ENCODE measurements at regions of chr11 and their contacts with region 1.

Region 1: DNA sequence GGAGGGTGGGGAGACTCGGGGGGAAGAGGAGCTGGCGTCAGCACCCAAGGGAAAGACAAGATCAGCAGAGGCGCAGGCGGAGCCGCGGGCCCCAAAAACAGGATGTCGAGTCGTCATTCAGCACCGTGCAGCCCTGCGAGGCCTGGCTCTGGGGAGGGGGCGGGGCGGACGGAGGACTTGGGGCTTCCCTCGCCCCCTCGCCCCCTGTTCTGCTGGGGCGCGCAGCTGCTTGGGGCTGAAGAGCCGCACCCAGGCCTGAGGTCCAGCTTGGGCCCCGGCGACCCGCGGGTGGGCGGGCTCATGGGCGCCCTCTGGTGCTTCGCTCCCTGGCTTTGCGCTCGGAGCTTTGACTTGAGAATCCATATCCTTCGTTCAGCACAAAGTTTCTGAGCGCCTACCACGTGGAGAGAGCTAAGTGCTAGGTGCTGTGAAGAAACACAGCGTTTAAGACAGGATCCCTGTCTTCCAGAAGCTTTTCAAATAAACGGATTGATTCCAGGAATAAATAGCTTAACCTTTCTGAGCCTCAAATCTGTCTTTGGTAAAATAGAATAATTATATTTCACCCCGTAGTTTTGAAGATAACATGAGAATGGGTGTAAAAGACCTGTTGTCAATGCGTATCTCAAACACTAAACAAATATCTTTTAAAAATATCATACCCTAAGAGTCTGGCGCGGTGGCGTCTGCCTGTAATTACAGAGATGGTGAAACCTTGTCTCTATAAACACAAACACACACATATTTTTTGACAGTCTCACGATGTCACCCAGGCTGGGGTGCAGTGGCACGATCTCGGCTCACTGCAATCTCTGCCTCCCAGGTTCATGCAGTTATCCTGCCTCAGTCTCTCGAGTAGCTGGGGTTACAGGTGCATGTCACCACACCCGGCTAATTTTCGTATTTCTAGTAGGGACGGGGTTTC is 929 bp upstream of the RHOG start:
- DNase-seq: peak; percentile 93
- H3K4me3 Mint-ChIP-seq: peak overlapping the region; percentile 90
- H3K27ac Mint-ChIP-seq: peak overlapping the region; percentile 96
- H3K4me1 Mint-ChIP-seq: peaks cover 44% of the 10 kb centered on the region
- H3K27me3 Mint-ChIP-seq: no peaks in the 10 kb centered on the region

Region 2: DNA sequence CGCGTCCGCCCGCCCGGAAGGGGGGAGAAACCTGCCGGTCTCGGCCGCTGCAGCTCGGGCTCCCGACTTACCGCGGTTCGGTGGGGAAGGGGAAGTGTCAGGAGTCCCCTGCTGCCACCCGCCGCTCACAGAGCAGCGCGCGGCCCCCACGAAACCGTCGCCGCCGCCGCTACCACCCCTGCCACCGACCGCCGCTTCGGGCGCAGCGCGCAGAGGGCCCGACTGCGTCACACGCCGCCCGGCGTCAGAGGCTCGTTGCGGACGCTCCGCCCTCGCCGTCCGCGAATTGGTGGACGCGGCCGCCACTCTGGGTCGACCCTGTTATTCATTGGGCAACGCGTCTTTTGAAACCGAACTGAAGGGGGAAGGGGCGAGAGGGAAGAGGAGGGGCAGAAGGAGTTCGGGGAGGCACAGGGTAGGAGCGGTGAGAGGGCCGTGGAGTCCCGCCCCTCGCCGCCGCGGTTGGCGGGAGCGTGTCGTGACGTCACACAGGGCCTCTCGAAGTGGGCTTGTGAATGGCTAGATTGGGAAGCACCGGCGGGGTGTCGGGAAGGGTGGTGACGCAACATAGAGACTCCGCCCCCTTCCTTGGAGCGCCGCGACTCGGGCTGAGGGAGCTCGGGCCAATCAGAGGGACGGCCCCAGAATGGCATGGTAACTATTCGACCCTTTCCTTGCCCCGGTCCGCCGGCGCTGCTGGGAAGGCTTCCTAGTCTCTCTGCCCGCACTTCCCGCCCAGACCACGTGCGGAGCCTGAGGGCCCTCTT is 44.2 kb before region 1 on chr11 and contains the start of gene NUP98:
- CTCF ChIA-PET with region 1: interaction called, 7 read pairs
- POLR2A ChIA-PET with region 1: interaction called, 34 read pairs
- DNase-seq: peak; percentile 100
- H3K4me3 Mint-ChIP-seq: peak within 1 kb of the TSS; percentile 93
- H3K27ac Mint-ChIP-seq: peak within 1 kb of the TSS; percentile 92
- H3K4me1 Mint-ChIP-seq: peaks cover 51% of the 10 kb centered on the region
- H3K27me3 Mint-ChIP-seq: no peaks in the 10 kb centered on the region
- total RNA-seq, gene NUP98: 93.9 to 95.2 TPM

Region 3: GRCh38 chr11:3824714-3825472 is 16.8 kb before region 1 on chr11:
- CTCF ChIA-PET with region 1: interaction called, 34 read pairs
- POLR2A ChIA-PET with region 1: interaction called, 45 read pairs
- DNase-seq: peak; percentile 82
- H3K4me3 Mint-ChIP-seq: no peak overlapping the region
- H3K27ac Mint-ChIP-seq: peak overlapping the region; percentile 56
- H3K4me1 Mint-ChIP-seq: peaks cover 30% of the 10 kb centered on the region
- H3K27me3 Mint-ChIP-seq: no peaks in the 10 kb centered on the region

Region 4: DNA sequence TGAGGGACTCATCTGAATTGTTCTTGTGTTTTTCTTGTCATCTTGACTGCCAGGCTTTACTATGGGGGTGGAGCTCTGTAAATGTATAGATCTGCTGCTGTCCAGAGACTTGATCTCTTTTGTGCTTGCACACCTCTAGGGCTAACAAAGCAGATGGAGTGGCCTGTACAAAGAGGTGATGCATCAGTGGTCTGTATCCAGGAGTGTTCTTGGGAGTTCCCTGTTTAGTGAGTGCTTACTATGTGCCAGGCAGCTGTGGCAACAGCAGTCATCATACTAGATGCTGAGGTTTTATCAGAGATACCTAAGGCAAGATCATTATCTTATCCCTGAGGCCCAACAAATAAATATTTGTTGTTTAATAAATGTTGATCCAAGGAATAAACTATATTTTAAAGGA is 47.2 kb after region 1 on chr11:
- CTCF ChIA-PET with region 1: no interaction called
- POLR2A ChIA-PET with region 1: no interaction called
- DNase-seq: no peak
- H3K4me3 Mint-ChIP-seq: no peak overlapping the region
- H3K27ac Mint-ChIP-seq: no peak overlapping the region
- H3K4me1 Mint-ChIP-seq: peaks cover 25% of the 10 kb centered on the region
- H3K27me3 Mint-ChIP-seq: no peaks in the 10 kb centered on the region

Region 5: DNA sequence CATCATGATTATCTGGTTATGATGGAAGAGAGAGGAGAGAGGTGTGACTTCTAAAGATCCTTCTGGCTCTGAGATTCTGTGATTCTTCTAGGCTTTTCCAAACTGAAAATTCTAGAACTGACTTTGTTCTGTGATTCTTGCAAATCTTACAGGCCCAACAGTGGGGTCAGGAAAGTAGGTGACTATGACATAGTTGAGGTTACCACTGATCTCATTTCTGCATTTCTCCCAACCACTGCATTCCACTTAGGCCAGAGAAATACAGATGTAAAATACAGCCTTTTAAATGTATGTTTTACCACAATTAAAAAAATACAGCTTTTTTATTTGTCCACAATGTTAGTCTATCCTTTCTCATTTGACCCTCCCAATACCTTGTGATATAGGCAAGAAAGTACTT is 97.5 kb after region 1 on chr11:
- CTCF ChIA-PET with region 1: interaction called, 3 read pairs
- POLR2A ChIA-PET with region 1: interaction called, 17 read pairs
- DNase-seq: no peak
- H3K4me3 Mint-ChIP-seq: no peak overlapping the region
- H3K27ac Mint-ChIP-seq: no peak overlapping the region
- H3K4me1 Mint-ChIP-seq: peaks cover 70% of the 10 kb centered on the region
- H3K27me3 Mint-ChIP-seq: no peaks in the 10 kb centered on the region

Region 6: GRCh38 chr11:3959015-3959919 is 117.6 kb after region 1 on chr11:
- CTCF ChIA-PET with region 1: interaction called, 3 read pairs
- POLR2A ChIA-PET with region 1: interaction called, 13 read pairs
- DNase-seq: no peak
- H3K4me3 Mint-ChIP-seq: no peak overlapping the region
- H3K27ac Mint-ChIP-seq: no peak overlapping the region
- H3K4me1 Mint-ChIP-seq: peaks cover 63% of the 10 kb centered on the region
- H3K27me3 Mint-ChIP-seq: no peaks in the 10 kb centered on the region

Region 7: DNA sequence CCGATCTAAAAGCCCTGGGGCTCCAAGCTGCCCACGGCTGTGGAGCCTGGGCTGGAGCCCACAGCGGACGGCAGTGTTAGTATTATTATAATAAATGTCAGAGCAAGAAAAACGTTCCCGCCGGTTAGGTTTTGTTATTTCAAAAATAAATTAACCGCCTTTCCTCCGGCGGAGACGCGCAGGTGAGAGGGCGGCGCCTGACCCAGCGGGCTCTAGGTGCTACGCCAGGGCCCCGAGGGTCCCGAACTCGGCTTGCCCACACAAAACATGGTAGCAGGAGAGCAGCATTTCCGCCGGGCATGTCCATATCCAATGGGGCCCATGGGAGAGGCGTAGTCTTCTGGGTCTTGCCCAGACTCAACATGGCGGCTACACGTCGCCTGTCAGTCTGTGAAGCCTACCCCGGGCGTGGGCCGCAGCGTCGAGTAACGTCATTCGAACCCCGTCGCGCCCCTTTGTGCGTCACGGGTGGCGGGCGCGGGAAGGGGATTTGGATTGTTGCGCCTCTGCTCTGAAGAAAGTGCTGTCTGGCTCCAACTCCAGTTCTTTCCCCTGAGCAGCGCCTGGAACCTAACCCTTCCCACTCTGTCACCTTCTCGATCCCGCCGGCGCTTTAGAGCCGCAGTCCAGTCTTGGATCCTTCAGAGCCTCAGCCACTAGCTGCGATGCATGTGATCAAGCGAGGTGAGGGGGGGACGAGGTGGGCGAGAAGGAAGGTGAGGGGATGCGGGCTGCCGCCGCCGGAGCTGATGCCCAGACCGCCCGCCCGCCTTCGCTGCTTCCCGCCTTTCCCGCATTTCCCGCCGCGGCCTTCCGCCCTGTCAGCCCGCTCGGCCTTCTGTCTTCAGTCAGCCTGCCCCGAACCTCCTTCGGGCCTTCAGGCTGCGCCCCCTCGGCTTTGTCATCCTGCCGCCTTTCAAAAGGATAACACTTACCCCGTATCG is 252.9 kb after region 1 on chr11 and contains the start of gene RRM1:
- CTCF ChIA-PET with region 1: interaction called, 6 read pairs
- POLR2A ChIA-PET with region 1: interaction called, 37 read pairs
- DNase-seq: peak; percentile 94
- H3K4me3 Mint-ChIP-seq: peak within 1 kb of the TSS; percentile 99
- H3K27ac Mint-ChIP-seq: peak within 1 kb of the TSS; percentile 97
- H3K4me1 Mint-ChIP-seq: peaks cover 79% of the 10 kb centered on the region
- H3K27me3 Mint-ChIP-seq: no peaks in the 10 kb centered on the region
- total RNA-seq, gene RRM1: 156 to 161 TPM